K562 (cell line): ENCODE measurements at regions of chr6 and their contacts with region 1.

Region 1: DNA sequence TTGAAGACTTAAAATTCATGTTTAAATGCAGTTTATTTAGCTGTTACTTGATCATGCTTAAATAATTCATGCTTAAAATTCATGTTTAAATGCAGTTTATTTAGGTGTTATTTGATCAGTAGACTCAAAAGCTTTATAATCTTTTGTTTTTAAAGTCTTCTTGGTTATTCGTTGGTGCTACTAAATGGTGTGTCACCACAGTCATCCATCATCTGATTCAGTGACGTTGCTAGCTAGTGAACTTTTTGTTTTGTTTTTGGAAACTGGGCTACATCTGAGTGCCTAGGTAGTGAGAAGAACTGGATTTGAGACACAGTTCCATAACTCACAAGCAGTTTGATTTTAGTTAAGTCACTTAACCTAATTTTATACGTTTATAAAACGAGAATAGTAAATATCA is 20.9 kb downstream of the SCAF8 start:
- DNase-seq: peak in 1 of 4 experiments; percentile 37
- ATAC-seq: peak; percentile 52
- H3K4me3 ChIP-seq: no peak overlapping the region
- H3K27ac ChIP-seq: peak overlapping the region; percentile 11; the same call in 1 of the 3 replicates
- H3K4me1 ChIP-seq: peaks cover 0 to 4% of the 10 kb centered on the region in 2 experiments; a peak in 1 of 5 replicates
- H3K27me3 ChIP-seq: no peaks in the 10 kb centered on the region
- CTCF ChIP-seq: no peak
- EP300 ChIP-seq: no peak
- POLR2A ChIP-seq: no peak
- RAD21 ChIP-seq: no peak

Region 2: DNA sequence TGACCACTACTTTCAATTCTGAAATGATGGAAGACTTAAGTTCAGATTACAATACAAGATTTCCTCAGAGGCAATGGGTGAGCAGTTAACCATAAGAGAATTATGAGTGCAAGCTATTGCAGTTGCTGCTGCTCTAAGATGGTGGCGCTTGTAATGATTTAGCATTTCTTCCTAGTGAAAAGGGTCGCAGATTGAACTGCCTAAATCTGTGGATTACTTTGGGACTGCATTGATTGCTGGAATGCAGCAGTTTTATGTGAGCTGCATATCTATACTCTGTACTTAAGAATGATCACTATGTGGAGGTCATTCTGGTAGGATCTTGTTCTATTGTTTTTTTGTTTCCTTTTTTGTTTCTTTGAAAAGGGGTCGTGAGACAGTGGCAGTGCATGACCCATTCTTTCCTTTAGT is 15.6 kb before region 1 on chr6:
- CTCF ChIA-PET with region 1: no interaction called
- POLR2A ChIA-PET with region 1: interaction called, 17 read pairs
- in situ Hi-C with region 1: no loop called
- intact Hi-C with region 1: no loop called
- DNase-seq: peak in 1 of 4 experiments; percentile 19
- ATAC-seq: no peak
- H3K4me3 ChIP-seq: no peak overlapping the region
- H3K27ac ChIP-seq: 0 out of 3 replicates have a peak overlapping the region, but pooled peaks have one; percentile 1
- H3K4me1 ChIP-seq: peaks cover 13 to 14% of the 10 kb centered on the region in 2 experiments; a peak in 4 of 5 replicates
- H3K27me3 ChIP-seq: no peaks in the 10 kb centered on the region
- CTCF ChIP-seq: no peak
- EP300 ChIP-seq: no peak
- POLR2A ChIP-seq: no peak
- RAD21 ChIP-seq: no peak